HEK293 (cell line): ENCODE measurements at regions of chr1 and their contacts with region 1.

Region 1: GRCh38 chr1:229227298-229227919 is 43.5 kb upstream of the RAB4A start:
- H3K4me3 ChIP-seq: no peak overlapping the region
- H3K27ac ChIP-seq: no peak overlapping the region; the same call in 1 of the 2 replicates
- H3K4me1 ChIP-seq: peaks cover 65% of the 10 kb centered on the region
- CTCF ChIP-seq: no peak; the same call in none of the 2 replicates

Region 2: DNA sequence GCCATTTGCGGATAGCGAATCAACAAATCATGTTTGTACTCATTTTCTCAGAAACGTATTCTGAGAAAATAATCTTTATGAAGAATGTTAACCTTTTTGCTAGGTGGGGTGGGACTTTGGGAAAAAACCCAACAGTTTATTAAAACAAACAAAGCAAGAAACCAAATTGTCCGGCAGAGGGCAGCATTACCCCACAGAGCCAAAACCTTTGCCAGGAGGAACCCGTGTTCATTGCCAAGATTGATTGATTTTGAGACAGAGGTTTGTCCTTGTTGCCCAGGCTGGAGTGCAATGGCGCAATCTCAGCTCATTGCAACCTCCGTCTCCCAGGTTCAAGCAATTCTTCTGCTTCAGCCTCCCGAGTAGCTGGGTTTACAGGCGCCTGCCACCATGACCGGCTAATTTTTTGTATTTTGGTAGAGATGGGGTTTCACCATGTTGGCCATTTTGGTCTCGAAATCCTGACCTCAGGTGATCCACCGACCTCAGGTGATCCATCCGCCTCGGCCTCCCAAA is 563.0 kb before region 1 on chr1:
- CTCF ChIA-PET with region 1: interaction called, 65 read pairs
- POLR2A ChIA-PET with region 1: no interaction called
- H3K4me3 ChIP-seq: no peak overlapping the region
- H3K27ac ChIP-seq: no peak overlapping the region
- H3K4me1 ChIP-seq: no peaks in the 10 kb centered on the region
- CTCF ChIP-seq: peak; percentile 90

Region 3: GRCh38 chr1:228734881-228735801 is 492.3 kb before region 1 on chr1 and contains the start of gene RHOU:
- CTCF ChIA-PET with region 1: interaction called, 50 read pairs
- POLR2A ChIA-PET with region 1: interaction called, 5 read pairs
- H3K4me3 ChIP-seq: peak within 1 kb of the TSS; percentile 84
- H3K27ac ChIP-seq: peak within 1 kb of the TSS; percentile 97
- H3K4me1 ChIP-seq: peaks cover 12% of the 10 kb centered on the region
- CTCF ChIP-seq: peak; percentile 76

Region 4: DNA sequence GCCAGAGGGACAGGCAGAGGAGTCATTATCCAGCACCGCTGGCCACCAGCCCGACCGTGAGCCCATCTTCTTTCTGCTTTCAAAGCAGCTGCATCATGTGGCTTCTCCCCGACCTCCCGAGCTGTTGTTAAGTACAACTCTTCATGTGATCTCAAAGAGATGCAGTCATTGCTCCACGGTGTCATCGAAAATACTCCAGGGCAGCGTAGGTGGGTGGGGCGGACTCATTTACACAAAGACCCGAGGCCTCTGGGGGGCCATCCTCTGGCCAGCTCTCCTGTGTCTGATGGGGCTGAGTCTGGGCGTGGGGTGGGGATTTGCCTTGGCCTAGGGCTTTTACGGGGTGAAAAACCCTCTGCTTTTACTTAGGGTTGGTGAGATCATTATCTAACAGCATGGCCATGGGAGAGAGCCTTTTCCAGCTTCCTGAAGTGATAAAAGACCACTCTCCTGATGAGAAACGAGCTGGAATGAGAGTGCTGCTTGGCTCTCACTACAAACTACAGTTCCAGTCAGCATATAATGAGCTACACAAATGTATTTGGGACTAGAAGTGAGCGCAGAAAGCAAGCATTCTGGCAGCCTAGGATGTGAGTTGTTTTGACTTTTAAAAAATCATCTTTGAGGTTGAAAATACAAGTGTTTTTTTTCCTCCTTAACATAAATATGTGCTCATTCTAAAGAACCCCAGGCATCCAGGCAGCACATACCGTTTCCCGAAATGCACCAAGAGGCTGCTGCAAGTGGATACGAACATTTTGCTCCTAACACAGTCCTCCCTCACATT is 327.1 kb before region 1 on chr1:
- CTCF ChIA-PET with region 1: interaction called, 13 read pairs
- POLR2A ChIA-PET with region 1: no interaction called
- H3K4me3 ChIP-seq: no peak overlapping the region
- H3K27ac ChIP-seq: peak overlapping the region; percentile 76
- H3K4me1 ChIP-seq: peaks cover 46% of the 10 kb centered on the region
- CTCF ChIP-seq: no peak

Region 5: GRCh38 chr1:229102741-229103391 is 124.5 kb before region 1 on chr1:
- CTCF ChIA-PET with region 1: interaction called, 19 read pairs
- POLR2A ChIA-PET with region 1: no interaction called
- H3K4me3 ChIP-seq: no peak overlapping the region
- H3K27ac ChIP-seq: no peak overlapping the region
- H3K4me1 ChIP-seq: no peaks in the 10 kb centered on the region
- CTCF ChIP-seq: no peak

Region 6: GRCh38 chr1:229156872-229157271 is 70.5 kb before region 1 on chr1:
- CTCF ChIA-PET with region 1: interaction called, 26 read pairs
- POLR2A ChIA-PET with region 1: no interaction called
- H3K4me3 ChIP-seq: no peak overlapping the region
- H3K27ac ChIP-seq: no peak overlapping the region
- H3K4me1 ChIP-seq: no peaks in the 10 kb centered on the region; the same call in 1 of the 2 replicates
- CTCF ChIP-seq: peak; percentile 71; the same call in 1 of the 2 replicates

Region 7: GRCh38 chr1:229410692-229411443 is 183.5 kb after region 1 on chr1:
- CTCF ChIA-PET with region 1: no interaction called
- POLR2A ChIA-PET with region 1: no interaction called
- H3K4me3 ChIP-seq: no peak overlapping the region
- H3K27ac ChIP-seq: peak overlapping the region; percentile 33; the same call in 1 of the 2 replicates
- H3K4me1 ChIP-seq: peaks cover 14% of the 10 kb centered on the region
- CTCF ChIP-seq: peak; percentile 23; the same call in 1 of the 2 replicates